ENCODE measurements at regions of chr2 and their contacts with region 1.

Region 1: DNA sequence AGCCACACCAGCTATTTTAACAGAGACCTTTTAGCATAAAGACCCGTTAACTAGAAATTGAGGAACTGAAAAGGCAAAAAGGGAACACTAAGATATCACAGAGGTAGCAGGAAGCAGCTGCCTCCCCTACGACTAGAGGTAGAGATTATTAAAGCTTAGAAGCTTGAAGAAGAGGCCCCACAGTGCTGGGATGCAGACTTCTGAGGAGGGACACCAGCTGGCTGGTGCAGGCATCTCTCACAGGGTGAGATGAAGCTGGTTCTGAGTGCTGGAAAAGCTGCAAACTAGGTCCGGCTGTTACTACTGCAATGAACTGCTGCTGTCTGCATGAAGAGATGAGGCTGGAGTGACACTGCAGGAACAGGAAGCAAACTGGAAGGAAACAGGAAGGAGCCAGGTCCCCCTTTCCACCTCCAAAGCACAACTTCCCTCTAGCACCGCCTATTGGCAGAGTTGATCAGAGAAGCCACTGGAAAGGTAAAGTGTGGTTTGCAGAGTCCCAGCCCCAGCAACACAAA is 61.2 kb upstream of the MRPS9 start:
- DNase-seq: peak; percentile 52
- ATAC-seq: peak; percentile 95
- H3K4me3 Mint-ChIP-seq: peak overlapping the region; percentile 77
- H3K27ac Mint-ChIP-seq: peak overlapping the region; percentile 89
- H3K4me1 Mint-ChIP-seq: peaks cover 37% of the 10 kb centered on the region
- H3K27me3 Mint-ChIP-seq: no peaks in the 10 kb centered on the region
- CTCF ChIP-seq: no peak

Region 2: GRCh38 chr2:104849618-104850141 is 127.0 kb before region 1 on chr2:
- CTCF ChIA-PET with region 1: interaction called, 7 read pairs
- POLR2A ChIA-PET with region 1: interaction called, 3 read pairs
- intact Hi-C with region 1: loop called (anchors 5 kb)
- DNase-seq: no peak
- ATAC-seq: no peak
- H3K4me3 Mint-ChIP-seq: no peak overlapping the region
- H3K27ac Mint-ChIP-seq: peak overlapping the region; percentile 14
- H3K4me1 Mint-ChIP-seq: peaks cover 30% of the 10 kb centered on the region
- H3K27me3 Mint-ChIP-seq: peaks cover 84% of the 10 kb centered on the region
- CTCF ChIP-seq: no peak

Region 3: GRCh38 chr2:104889291-104889959 is 87.2 kb before region 1 on chr2:
- CTCF ChIA-PET with region 1: no interaction called
- POLR2A ChIA-PET with region 1: no interaction called
- intact Hi-C with region 1: loop called (anchors 2 kb)
- DNase-seq: no peak
- ATAC-seq: peak; percentile 91
- H3K4me3 Mint-ChIP-seq: peak overlapping the region; percentile 1
- H3K27ac Mint-ChIP-seq: no peak overlapping the region
- H3K4me1 Mint-ChIP-seq: peaks cover 35% of the 10 kb centered on the region
- H3K27me3 Mint-ChIP-seq: peaks cover 3% of the 10 kb centered on the region
- CTCF ChIP-seq: no peak

Region 4: GRCh38 chr2:104938231-104938941 is 38.3 kb before region 1 on chr2:
- CTCF ChIA-PET with region 1: interaction called, 10 read pairs
- POLR2A ChIA-PET with region 1: interaction called, 10 read pairs
- intact Hi-C with region 1: loop called (anchors 1 kb)
- DNase-seq: peak; percentile 26
- ATAC-seq: peak; percentile 94
- H3K4me3 Mint-ChIP-seq: peak overlapping the region; percentile 72
- H3K27ac Mint-ChIP-seq: peak overlapping the region; percentile 68
- H3K4me1 Mint-ChIP-seq: peaks cover 35% of the 10 kb centered on the region
- H3K27me3 Mint-ChIP-seq: no peaks in the 10 kb centered on the region
- CTCF ChIP-seq: no peak

Region 5: GRCh38 chr2:105007367-105007766 is 30.7 kb after region 1 on chr2:
- CTCF ChIA-PET with region 1: no interaction called
- POLR2A ChIA-PET with region 1: no interaction called
- intact Hi-C with region 1: no loop called
- DNase-seq: no peak
- ATAC-seq: no peak
- H3K4me3 Mint-ChIP-seq: no peak overlapping the region
- H3K27ac Mint-ChIP-seq: no peak overlapping the region
- H3K4me1 Mint-ChIP-seq: no peaks in the 10 kb centered on the region
- H3K27me3 Mint-ChIP-seq: peaks cover 7% of the 10 kb centered on the region
- CTCF ChIP-seq: no peak

Region 6: DNA sequence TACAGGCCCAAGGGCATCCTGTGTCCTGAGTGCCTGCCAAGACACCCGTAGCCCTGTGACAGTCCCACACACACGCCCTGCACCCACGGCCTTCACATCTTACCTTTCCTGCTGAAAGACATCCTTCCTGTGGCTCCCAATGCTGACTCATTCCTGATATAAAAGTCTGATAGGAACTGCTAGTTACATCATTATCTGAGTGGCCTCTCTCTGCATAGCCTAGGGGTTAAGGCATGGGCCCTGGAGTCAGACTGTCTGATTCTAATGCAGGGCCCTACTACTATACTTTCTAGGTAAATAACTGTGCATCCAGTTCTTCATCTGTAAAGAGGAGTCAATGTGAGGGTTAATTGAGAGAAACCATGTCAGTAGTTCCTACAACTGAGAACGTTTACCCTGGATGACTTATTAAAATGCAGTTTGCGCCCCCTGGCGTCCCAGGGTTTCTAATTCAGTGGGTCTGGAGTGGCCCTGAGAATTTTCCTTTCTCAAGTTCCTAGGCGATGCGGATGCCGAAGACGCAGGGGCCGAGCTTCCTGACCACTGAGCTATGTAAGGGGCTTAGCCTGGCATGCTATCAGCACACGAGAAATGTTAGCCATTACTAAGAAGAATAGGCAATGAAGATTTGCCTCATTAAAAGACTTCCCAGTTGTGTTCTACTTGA is 258.9 kb after region 1 on chr2:
- CTCF ChIA-PET with region 1: no interaction called
- POLR2A ChIA-PET with region 1: no interaction called
- intact Hi-C with region 1: loop called (anchors 5 kb)
- DNase-seq: peak; percentile 50
- ATAC-seq: peak; percentile 76
- H3K4me3 Mint-ChIP-seq: no peak overlapping the region
- H3K27ac Mint-ChIP-seq: no peak overlapping the region
- H3K4me1 Mint-ChIP-seq: peaks cover 25% of the 10 kb centered on the region
- H3K27me3 Mint-ChIP-seq: no peaks in the 10 kb centered on the region
- CTCF ChIP-seq: peak; percentile 58

Region 7: DNA sequence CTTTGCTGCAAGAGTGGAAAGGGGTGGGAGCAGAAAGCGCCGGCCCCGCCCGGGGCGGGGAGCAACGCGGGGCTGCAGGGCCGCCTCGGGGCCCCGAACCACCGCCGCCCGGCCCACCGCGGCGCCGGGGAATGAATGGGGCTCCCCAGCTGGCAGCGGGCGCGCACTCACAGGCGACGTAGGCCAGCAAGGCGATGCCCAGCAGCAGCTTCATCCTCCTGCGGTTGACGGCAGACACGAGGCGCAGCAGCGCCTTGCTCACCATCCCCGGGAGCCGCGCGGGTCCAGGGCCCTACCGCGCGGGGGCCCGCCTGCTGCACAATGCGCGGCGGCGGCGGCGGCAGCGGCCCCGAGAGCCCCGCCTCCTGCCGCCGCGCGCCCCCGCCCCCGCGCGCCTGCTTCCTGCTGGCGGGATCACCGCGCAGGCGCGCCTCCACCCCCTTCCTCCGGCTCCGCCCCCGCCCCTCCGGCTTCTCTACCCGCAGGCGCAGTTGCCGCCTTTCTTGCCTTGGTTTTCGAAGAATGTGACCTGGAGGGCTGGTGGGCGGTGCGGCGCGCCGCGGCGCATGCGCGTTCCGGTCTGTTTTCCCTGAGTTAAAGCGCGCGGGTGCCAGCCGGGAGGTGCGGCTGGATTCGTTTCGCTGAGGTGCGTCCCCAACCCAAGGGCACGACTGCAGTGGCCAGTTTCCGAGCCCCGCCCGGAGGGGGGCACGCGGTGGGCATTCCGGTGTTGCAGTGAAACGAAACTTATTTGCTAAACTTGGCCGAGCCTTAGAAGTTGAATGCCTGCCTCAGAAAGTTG is 1217.5 kb after region 1 on chr2 and contains the start of gene UXS1:
- CTCF ChIA-PET with region 1: no interaction called
- POLR2A ChIA-PET with region 1: no interaction called
- intact Hi-C with region 1: loop called (anchors 5 kb)
- DNase-seq: peak; percentile 98
- ATAC-seq: peak; percentile 81
- H3K4me3 Mint-ChIP-seq: peak within 1 kb of the TSS; percentile 95
- H3K27ac Mint-ChIP-seq: peak within 1 kb of the TSS; percentile 91
- H3K4me1 Mint-ChIP-seq: peaks cover 42% of the 10 kb centered on the region
- H3K27me3 Mint-ChIP-seq: no peaks in the 10 kb centered on the region
- CTCF ChIP-seq: no peak
- total RNA-seq, gene UXS1: 20.0 and 24.2 TPM in 2 replicates

Measured in activated B cell treated with CpG ODN at 0.5 μM for 24 hours (primary cell).